ENCODE measurements at regions of chr16 and their contacts with region 1.

Region 1: DNA sequence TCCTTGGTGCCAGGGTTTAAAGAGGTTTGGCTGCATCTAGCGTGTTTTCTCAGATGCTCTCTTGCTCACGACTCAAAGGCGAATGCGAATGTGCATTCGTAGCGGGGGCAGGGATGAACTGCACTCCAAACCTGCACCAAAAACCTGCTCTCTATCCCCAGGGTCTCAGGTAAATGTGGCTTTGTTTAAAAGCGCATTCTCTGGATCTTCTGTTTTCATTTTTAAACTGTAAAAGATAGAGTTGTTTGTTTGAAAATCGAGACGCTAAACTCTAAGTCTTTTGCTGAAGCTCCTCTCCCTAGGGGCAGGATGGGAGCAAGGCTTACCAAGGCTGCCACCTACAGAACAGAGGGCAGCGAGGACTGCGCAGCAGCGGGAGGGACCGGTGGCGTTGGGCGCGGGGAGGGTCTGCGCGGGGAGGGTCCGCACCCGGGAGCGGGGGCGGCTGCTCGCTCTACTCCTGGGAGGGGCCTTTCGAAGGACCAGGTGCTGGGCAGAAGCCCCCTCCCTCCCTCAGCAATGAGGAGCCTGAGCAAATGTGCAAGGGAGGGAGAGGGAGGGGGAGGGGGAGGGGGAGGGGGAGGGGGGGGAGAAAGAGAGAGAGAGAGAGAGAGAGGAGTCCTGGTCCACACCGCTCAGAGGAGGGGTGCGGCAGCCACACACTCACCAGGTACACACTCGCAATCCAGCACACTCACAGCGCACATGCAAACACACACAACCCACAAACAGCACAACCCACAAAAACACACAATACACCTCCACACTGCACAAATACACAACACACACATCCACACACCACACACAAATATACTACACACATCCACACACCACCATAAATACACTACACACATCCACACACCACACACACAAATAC is 142.8 kb downstream of the GRIN2A start:
- DNase-seq: no peak
- H3K4me3 ChIP-seq: peak overlapping the region; percentile 47 to 61 (median 52)
- H3K27ac ChIP-seq: peak overlapping the region in 3 of 4 donors; percentile 13 to 65 (median 36)
- H3K4me1 ChIP-seq: peaks cover 0 to 13% (median 11%) of the 10 kb centered on the region in 4 donors
- H3K27me3 ChIP-seq: no peaks in the 10 kb centered on the region
- CTCF ChIP-seq: peak; percentile 16 to 49 (median 17)
- EP300 ChIP-seq: no peak
- POLR2A ChIP-seq: no peak

Region 2: DNA sequence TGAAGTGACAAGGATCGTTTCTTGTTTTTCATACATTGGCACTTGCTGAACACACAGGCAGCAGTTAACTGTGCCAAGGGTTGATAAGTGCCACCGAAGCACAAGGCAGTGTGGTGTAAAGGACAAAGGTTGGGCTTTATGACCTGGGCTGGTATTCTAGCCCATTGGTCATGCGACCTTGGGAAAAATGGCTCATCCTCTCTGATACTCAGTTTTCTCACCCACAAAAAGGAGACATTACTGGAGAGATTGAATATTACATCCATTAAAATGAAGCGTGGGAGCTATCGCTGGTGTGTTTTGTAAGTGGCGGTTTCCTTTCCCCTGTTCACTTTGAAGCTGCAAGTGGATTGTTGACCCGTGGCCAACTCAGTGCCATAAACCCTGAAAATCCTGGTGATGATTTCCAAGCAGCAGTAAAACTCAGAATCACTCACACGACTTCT is 731.1 kb before region 1 on chr16:
- intact Hi-C with region 1: loop called (anchors 10 kb)
- DNase-seq: no peak
- H3K4me3 ChIP-seq: no peak overlapping the region
- H3K27ac ChIP-seq: no peak overlapping the region
- H3K4me1 ChIP-seq: peaks cover 0 to 3% (median 0%) of the 10 kb centered on the region in 4 donors
- H3K27me3 ChIP-seq: no peaks in the 10 kb centered on the region
- CTCF ChIP-seq: no peak
- EP300 ChIP-seq: no peak
- POLR2A ChIP-seq: no peak

Region 3: GRCh38 chr16:9976601-9977000 is 62.9 kb before region 1 on chr16:
- intact Hi-C with region 1: no loop called
- DNase-seq: peak; percentile 62
- H3K4me3 ChIP-seq: no peak overlapping the region
- H3K27ac ChIP-seq: no peak overlapping the region
- H3K4me1 ChIP-seq: no peaks in the 10 kb centered on the region
- H3K27me3 ChIP-seq: no peaks in the 10 kb centered on the region
- CTCF ChIP-seq: no peak
- EP300 ChIP-seq: no peak
- POLR2A ChIP-seq: no peak

Region 4: GRCh38 chr16:10103118-10103517 is 63.7 kb after region 1 on chr16:
- intact Hi-C with region 1: no loop called
- DNase-seq: no peak
- H3K4me3 ChIP-seq: no peak overlapping the region
- H3K27ac ChIP-seq: peak overlapping the region in 1 of 4 donors; percentile 50
- H3K4me1 ChIP-seq: peaks cover 0 to 21% (median 21%) of the 10 kb centered on the region in 4 donors
- H3K27me3 ChIP-seq: no peaks in the 10 kb centered on the region
- CTCF ChIP-seq: no peak
- EP300 ChIP-seq: no peak
- POLR2A ChIP-seq: no peak

Region 5: DNA sequence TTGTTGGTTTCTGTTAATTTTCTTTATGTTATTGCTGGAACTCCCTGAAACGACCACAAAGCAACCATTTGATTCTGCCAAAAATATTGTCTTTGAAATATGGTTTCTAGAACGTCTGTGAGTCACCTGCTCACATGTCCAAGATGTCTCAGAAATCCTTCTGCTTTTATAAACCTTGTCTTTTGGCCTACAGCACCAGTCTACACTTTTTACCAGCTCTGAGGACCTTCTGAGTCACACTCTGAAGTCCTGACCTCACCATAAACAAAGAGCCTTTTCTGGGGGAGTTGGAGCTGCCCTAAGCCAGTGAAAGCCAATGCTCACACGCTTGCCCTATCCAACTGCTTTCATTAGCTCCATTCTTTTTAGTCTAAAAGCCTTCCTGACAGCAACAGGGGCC is 87.2 kb after region 1 on chr16:
- intact Hi-C with region 1: loop called (anchors 5 kb)
- DNase-seq: no peak
- H3K4me3 ChIP-seq: no peak overlapping the region
- H3K27ac ChIP-seq: peak overlapping the region; percentile 49 to 74 (median 70)
- H3K4me1 ChIP-seq: peaks cover 16 to 68% (median 57%) of the 10 kb centered on the region in 4 donors
- H3K27me3 ChIP-seq: no peaks in the 10 kb centered on the region
- CTCF ChIP-seq: no peak
- EP300 ChIP-seq: no peak
- POLR2A ChIP-seq: no peak